SK-N-SH (cell line): ENCODE measurements at regions of chr9 and their contacts with region 1.

Region 1: GRCh38 chr9:89549031-89549644 is 51.2 kb upstream of the SEMA4D start:
- DNase-seq: peak; percentile 89
- H3K4me3 ChIP-seq: no peak overlapping the region; a peak in 1 of 4 replicates
- H3K27ac ChIP-seq: no peak overlapping the region
- H3K4me1 ChIP-seq: no peaks in the 10 kb centered on the region
- H3K27me3 ChIP-seq: no peaks in the 10 kb centered on the region
- CTCF ChIP-seq: peak; percentile 86
- EP300 ChIP-seq: no peak
- RAD21 ChIP-seq: peak; percentile 90

Region 2: DNA sequence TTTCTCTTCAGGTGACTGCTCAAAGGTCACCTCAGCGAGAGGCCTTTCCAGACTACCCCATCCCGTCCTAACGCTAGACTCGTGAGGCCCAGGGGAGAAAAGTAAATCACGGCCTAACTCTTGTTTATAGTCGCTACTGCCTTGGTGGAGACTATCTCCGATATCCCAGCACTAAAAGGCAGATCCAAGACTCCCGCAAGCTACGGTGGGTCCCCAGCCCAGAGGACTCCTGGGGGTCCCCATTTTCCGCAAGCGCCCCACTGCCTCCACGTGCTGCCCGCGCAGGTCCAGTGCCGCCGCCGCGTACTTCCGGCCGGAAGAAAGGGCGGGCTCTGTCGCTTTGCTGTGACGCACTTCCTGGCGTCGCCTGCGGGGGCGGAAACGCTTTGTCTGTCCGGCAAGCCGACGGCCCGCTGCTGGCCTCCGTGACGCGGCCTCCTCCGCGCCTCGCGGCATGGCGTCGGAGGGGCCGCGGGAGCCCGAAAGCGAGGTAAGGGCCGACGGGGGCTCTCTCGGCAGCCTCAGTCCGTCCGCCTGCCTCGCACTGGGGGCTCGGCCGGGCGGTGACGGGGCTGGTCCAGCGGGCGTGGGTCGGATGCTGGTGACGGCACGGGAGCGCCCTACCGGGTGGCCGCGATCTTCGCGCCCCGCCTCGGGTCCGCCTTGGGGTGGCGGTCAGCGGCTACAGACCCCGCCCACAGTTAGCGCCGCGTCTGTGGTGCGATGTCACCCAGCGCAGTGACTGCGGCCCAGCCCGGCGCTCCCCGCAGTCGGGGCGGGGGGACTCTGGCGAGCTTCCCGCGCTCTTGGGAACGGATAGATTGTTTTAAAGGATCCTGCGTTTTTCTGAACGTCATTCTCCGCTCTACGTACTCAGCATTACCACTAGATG is 230.8 kb before region 1 on chr9 and contains the start of gene SECISBP2:
- CTCF ChIA-PET with region 1: interaction called, 34 read pairs
- POLR2A ChIA-PET with region 1: interaction called, 5 read pairs
- DNase-seq: peak; percentile 94
- H3K4me3 ChIP-seq: peak within 1 kb of the TSS; percentile 73 to 77
- H3K27ac ChIP-seq: peak within 1 kb of the TSS; percentile 96 to 99
- H3K4me1 ChIP-seq: peaks cover 23 to 31% of the 10 kb centered on the region in 2 experiments
- H3K27me3 ChIP-seq: no peaks in the 10 kb centered on the region
- CTCF ChIP-seq: peak; percentile 93
- EP300 ChIP-seq: no peak
- RAD21 ChIP-seq: peak; percentile 77
- polyA plus RNA-seq, gene SECISBP2: 21.2 and 28.4 TPM in 2 replicates

Region 3: GRCh38 chr9:89323390-89323789 is 225.7 kb before region 1 on chr9:
- CTCF ChIA-PET with region 1: interaction called, 34 read pairs
- POLR2A ChIA-PET with region 1: interaction called, 5 read pairs
- DNase-seq: peak; percentile 32
- H3K4me3 ChIP-seq: no peak overlapping the region
- H3K27ac ChIP-seq: peak overlapping the region in 1 of 2 experiments; percentile 24; a peak in 2 of 4 replicates
- H3K4me1 ChIP-seq: peaks cover 8 to 21% of the 10 kb centered on the region in 2 experiments; a peak in 3 of 4 replicates
- H3K27me3 ChIP-seq: no peaks in the 10 kb centered on the region
- CTCF ChIP-seq: no peak
- EP300 ChIP-seq: no peak; a peak in 1 of 4 replicates
- RAD21 ChIP-seq: no peak

Region 4: GRCh38 chr9:89375191-89375760 is 173.9 kb before region 1 on chr9:
- CTCF ChIA-PET with region 1: interaction called, 52 read pairs
- POLR2A ChIA-PET with region 1: no interaction called
- DNase-seq: peak; percentile 85
- H3K4me3 ChIP-seq: no peak overlapping the region
- H3K27ac ChIP-seq: peak overlapping the region in 1 of 2 experiments; percentile 78; a peak in 2 of 4 replicates
- H3K4me1 ChIP-seq: peaks cover 0 to 16% of the 10 kb centered on the region in 2 experiments; a peak in 1 of 4 replicates
- H3K27me3 ChIP-seq: no peaks in the 10 kb centered on the region
- CTCF ChIP-seq: no peak
- EP300 ChIP-seq: peak in 1 of 2 experiments; percentile 81; a peak in 1 of 4 replicates
- RAD21 ChIP-seq: peak; percentile 52

Region 5: DNA sequence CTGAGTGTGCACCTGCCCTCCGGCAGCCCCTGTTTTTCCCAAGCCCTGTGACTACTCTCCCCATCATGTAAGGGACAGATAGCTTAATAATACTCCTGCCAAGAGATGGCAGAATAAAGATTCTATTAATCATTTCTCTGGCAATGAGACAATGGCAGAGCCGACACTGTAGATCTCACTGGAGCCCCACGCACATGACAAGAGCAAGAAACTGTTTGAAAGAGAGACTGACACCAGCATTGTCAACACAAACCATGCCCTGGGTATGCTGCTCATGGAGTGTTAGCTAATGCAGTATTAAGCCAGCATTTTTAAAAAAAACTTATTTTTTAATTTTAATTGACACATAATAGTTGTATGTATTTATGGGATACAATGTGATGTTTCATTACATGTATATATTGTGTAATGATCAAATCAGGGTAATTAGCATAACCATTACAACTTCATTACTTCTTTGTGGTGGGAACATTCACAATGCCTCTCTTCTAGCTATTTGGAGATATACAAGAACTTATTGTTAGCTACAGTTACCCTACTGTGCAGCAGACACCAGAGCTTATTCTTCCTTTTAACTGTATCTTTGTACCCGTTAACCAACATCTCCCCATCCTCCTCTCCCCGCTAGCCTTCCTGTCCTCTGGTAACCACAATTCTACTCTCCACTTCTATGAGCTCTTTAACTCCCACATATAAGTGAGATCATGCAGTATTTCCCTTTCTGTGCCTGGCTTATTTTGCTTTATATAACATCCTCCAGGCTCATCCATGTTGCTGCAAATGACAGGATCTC is 19.7 kb before region 1 on chr9:
- CTCF ChIA-PET with region 1: interaction called, 13 read pairs
- POLR2A ChIA-PET with region 1: interaction called, 5 read pairs
- DNase-seq: no peak
- H3K4me3 ChIP-seq: no peak overlapping the region
- H3K27ac ChIP-seq: no peak overlapping the region
- H3K4me1 ChIP-seq: peaks cover 0 to 12% of the 10 kb centered on the region in 2 experiments; a peak in 1 of 4 replicates
- H3K27me3 ChIP-seq: no peaks in the 10 kb centered on the region
- CTCF ChIP-seq: no peak
- EP300 ChIP-seq: no peak
- RAD21 ChIP-seq: no peak

Region 6: DNA sequence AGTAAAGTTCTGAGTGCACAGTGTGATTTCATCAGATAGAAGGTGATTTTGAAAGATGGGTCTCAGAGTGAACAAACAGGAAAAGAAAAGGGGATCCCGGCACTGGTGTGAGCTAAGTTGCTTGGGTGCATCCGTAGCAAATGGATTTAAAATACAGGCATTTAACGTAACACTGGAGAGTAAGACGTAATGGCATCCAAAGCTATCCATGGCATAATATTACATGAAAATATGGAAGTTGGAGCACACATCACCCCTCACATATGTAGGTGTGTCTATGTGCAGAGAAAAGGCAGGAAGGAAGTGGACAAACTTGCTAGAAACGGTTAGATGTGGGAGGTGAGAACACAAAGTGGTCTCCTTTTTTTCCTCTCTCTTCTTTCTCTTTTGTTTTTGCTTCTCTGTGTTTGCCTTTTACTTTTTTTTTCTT is 13.0 kb before region 1 on chr9:
- CTCF ChIA-PET with region 1: interaction called, 36 read pairs
- POLR2A ChIA-PET with region 1: interaction called, 5 read pairs
- DNase-seq: no peak
- H3K4me3 ChIP-seq: no peak overlapping the region
- H3K27ac ChIP-seq: peak overlapping the region in 1 of 2 experiments; percentile 61; a peak in 2 of 4 replicates
- H3K4me1 ChIP-seq: peaks cover 0 to 47% of the 10 kb centered on the region in 2 experiments; a peak in 1 of 4 replicates
- H3K27me3 ChIP-seq: no peaks in the 10 kb centered on the region
- CTCF ChIP-seq: no peak
- EP300 ChIP-seq: no peak
- RAD21 ChIP-seq: no peak

Region 7: DNA sequence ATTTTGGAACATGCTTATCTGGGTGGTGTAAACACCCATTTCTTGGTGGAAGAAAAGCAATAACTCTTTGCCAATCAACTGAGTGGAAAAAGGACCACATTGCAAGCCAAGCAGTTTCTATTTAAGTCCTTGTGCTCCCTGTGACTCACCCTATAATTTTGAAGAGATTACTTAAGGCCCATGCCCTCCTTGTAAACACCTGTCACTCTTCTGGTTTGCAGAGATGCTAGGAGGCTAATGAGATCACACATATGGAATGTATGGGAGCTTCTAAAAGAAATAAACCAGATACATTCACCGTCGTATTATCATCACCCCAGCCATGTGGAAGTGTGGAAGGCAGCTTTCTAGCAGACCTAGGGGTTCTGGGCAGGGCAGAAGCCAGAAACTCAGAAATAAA is 392.7 kb after region 1 on chr9:
- CTCF ChIA-PET with region 1: no interaction called
- POLR2A ChIA-PET with region 1: no interaction called
- DNase-seq: no peak
- H3K4me3 ChIP-seq: no peak overlapping the region
- H3K27ac ChIP-seq: no peak overlapping the region
- H3K4me1 ChIP-seq: peaks cover 0 to 11% of the 10 kb centered on the region in 2 experiments; a peak in 1 of 4 replicates
- H3K27me3 ChIP-seq: no peaks in the 10 kb centered on the region
- CTCF ChIP-seq: no peak
- EP300 ChIP-seq: no peak
- RAD21 ChIP-seq: no peak